Activated CD4-positive, alpha-beta T cell treated with anti-CD3 and anti-CD28 coated beads, Interleukin-2, amount 10 ng/mL, durations not matched to agents 24 days and 14 days (primary cell): ENCODE measurements at regions of chr15 and their contacts with region 1.

Region 1: DNA sequence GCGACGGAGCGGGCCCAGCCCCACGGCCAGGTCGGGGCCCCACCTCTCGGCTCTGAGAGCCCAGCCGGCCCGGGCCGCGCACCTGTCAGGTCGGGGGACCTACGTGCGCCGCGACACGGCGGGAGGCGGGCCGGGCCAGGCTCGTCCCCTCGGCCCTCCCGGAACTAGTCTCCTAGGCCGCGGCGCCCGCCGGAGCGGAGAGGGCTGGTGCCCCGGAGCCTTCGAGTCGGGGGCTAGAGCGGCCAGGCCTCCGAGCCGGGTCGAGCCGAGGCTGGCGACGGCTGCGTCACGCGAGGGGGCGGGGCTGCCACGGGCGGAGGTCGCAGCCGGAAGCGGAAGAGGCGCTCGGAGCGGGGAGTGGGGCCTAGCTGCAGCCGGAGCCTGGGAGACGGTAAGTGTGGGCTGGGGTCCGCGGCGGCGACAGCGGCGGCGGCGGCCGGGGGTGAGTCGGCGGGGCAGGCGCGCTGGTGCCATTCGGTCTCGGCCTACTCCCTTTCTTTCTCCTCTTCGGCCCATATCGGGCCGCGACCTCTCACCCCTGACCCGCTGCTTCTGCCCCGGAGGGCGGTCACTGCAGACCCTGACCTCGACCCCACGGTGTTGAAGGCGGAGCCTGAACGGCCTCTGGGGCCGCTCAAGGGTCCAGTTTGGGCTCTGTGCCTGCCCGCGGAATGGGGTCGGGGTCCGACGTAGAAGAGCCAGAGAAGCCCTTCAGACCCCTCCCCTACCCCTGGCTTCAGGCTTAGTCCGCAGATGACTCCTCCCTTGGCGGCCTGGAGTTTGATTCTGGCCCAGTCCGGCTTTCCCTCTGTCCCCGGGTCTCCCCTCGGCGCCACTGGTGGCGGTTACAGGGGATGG is at the start of gene CLK3:
- DNase-seq: peak; percentile 99
- H3K4me3 Mint-ChIP-seq: peak within 1 kb of the TSS; percentile 95
- H3K27ac Mint-ChIP-seq: peak within 1 kb of the TSS; percentile 97
- H3K4me1 Mint-ChIP-seq: peaks cover 41% of the 10 kb centered on the region
- H3K27me3 Mint-ChIP-seq: no peaks in the 10 kb centered on the region
- total RNA-seq, gene CLK3: 112 and 113 TPM in 2 replicates

Region 2: GRCh38 chr15:74545880-74546656 is 69.7 kb before region 1 on chr15:
- intact Hi-C with region 1: loop called (anchors 1 kb)
- DNase-seq: peak; percentile 93
- H3K4me3 Mint-ChIP-seq: peak overlapping the region; percentile 70
- H3K27ac Mint-ChIP-seq: peak overlapping the region; percentile 86
- H3K4me1 Mint-ChIP-seq: peaks cover 71% of the 10 kb centered on the region
- H3K27me3 Mint-ChIP-seq: no peaks in the 10 kb centered on the region

Region 3: GRCh38 chr15:74598126-74598842 is 17.5 kb before region 1 on chr15:
- intact Hi-C with region 1: loop called (anchors 1 kb)
- DNase-seq: peak; percentile 97
- H3K4me3 Mint-ChIP-seq: peak overlapping the region; percentile 95
- H3K27ac Mint-ChIP-seq: peak overlapping the region; percentile 98
- H3K4me1 Mint-ChIP-seq: peaks cover 20% of the 10 kb centered on the region
- H3K27me3 Mint-ChIP-seq: no peaks in the 10 kb centered on the region